GM13977 (cell line): ENCODE measurements at regions of chr10 and their contacts with region 1.

Region 1: GRCh38 chr10:27446091-27446918 is 57.8 kb upstream of the RAB18 start:
- DNase-seq: peak; percentile 9
- CTCF ChIP-seq: peak; percentile 29

Region 2: GRCh38 chr10:27658788-27659187 is 212.5 kb after region 1 on chr10:
- in situ Hi-C with region 1: loop called (anchors 10 kb)
- DNase-seq: no peak
- CTCF ChIP-seq: no peak

Region 3: GRCh38 chr10:27805180-27805579 is 358.9 kb after region 1 on chr10:
- in situ Hi-C with region 1: no loop called
- DNase-seq: no peak
- CTCF ChIP-seq: no peak